Activated B cell treated with CpG ODN at 0.5 μM for 24 hours (primary cell): ENCODE measurements at regions of chr1 and their contacts with region 1.

Region 1: GRCh38 chr1:36285448-36286101 is 20.6 kb upstream of the SH3D21 start:
- DNase-seq: no peak
- ATAC-seq: peak; percentile 92
- H3K4me3 Mint-ChIP-seq: no peak overlapping the region
- H3K27ac Mint-ChIP-seq: peak overlapping the region; percentile 59
- H3K4me1 Mint-ChIP-seq: peaks cover 11% of the 10 kb centered on the region
- H3K27me3 Mint-ChIP-seq: no peaks in the 10 kb centered on the region
- CTCF ChIP-seq: no peak

Region 2: DNA sequence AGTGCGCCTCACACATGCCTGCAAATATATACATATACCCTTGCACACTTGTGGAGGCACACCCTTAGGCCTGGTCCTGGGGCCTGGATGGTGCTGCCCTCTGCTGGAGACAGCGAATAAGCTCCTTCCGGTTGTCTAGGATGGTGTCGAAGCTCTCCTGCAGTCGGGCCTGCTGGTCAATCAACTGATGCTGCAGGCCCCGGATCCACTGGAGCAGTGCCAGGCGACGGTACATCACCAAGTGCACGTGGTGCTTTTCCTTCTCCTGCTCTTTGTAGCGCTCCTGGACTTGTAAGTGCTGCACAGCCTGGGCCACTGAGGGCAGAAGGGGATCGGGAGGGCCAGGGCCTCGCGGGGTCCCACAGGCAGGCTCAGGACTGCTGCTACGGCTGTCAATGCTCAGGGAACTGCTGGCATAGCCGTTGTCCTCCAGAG is 570.0 kb before region 1 on chr1:
- CTCF ChIA-PET with region 1: no interaction called
- POLR2A ChIA-PET with region 1: no interaction called
- intact Hi-C with region 1: no loop called
- DNase-seq: peak; percentile 56
- ATAC-seq: peak; percentile 67
- H3K4me3 Mint-ChIP-seq: peak overlapping the region; percentile 32
- H3K27ac Mint-ChIP-seq: no peak overlapping the region
- H3K4me1 Mint-ChIP-seq: peaks cover 28% of the 10 kb centered on the region
- H3K27me3 Mint-ChIP-seq: no peaks in the 10 kb centered on the region
- CTCF ChIP-seq: no peak

Region 3: GRCh38 chr1:36014722-36015220 is 270.8 kb before region 1 on chr1:
- CTCF ChIA-PET with region 1: no interaction called
- POLR2A ChIA-PET with region 1: no interaction called
- intact Hi-C with region 1: no loop called
- DNase-seq: no peak
- ATAC-seq: no peak
- H3K4me3 Mint-ChIP-seq: no peak overlapping the region
- H3K27ac Mint-ChIP-seq: no peak overlapping the region
- H3K4me1 Mint-ChIP-seq: no peaks in the 10 kb centered on the region
- H3K27me3 Mint-ChIP-seq: no peaks in the 10 kb centered on the region
- CTCF ChIP-seq: no peak

Region 4: GRCh38 chr1:36273024-36273423 is 12.6 kb before region 1 on chr1:
- CTCF ChIA-PET with region 1: no interaction called
- POLR2A ChIA-PET with region 1: no interaction called
- intact Hi-C with region 1: no loop called
- DNase-seq: no peak
- ATAC-seq: no peak
- H3K4me3 Mint-ChIP-seq: no peak overlapping the region
- H3K27ac Mint-ChIP-seq: no peak overlapping the region
- H3K4me1 Mint-ChIP-seq: peaks cover 21% of the 10 kb centered on the region
- H3K27me3 Mint-ChIP-seq: no peaks in the 10 kb centered on the region
- CTCF ChIP-seq: no peak

Region 5: DNA sequence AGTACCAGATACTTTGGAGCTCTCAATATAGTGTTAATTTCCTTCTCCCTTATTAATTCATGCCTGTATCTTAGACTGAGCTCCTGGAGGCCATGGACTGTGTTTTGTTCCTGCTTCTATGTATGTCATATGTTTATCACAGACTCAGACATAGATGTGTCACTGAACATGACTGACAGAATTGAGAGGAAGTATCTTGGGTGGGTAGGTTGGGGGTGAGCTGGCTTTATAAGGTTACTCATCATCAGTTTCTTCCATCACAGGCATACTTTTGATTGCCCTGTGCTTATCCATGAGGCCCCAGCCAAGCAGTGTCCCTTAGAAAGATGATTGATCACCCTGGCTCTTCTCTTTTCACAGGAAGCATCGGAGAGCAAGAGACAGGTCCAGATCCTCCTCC is 15.0 kb after region 1 on chr1:
- CTCF ChIA-PET with region 1: interaction called, 18 read pairs
- POLR2A ChIA-PET with region 1: interaction called, 5 read pairs
- intact Hi-C with region 1: no loop called
- DNase-seq: no peak
- ATAC-seq: peak; percentile 60
- H3K4me3 Mint-ChIP-seq: peak overlapping the region; percentile 5
- H3K27ac Mint-ChIP-seq: peak overlapping the region; percentile 77
- H3K4me1 Mint-ChIP-seq: peaks cover 38% of the 10 kb centered on the region
- H3K27me3 Mint-ChIP-seq: no peaks in the 10 kb centered on the region
- CTCF ChIP-seq: no peak

Region 6: GRCh38 chr1:36339615-36340600 is 54.3 kb after region 1 on chr1:
- CTCF ChIA-PET with region 1: no interaction called
- POLR2A ChIA-PET with region 1: no interaction called
- intact Hi-C with region 1: no loop called
- DNase-seq: no peak
- ATAC-seq: no peak
- H3K4me3 Mint-ChIP-seq: no peak overlapping the region
- H3K27ac Mint-ChIP-seq: no peak overlapping the region
- H3K4me1 Mint-ChIP-seq: peaks cover 5% of the 10 kb centered on the region
- H3K27me3 Mint-ChIP-seq: no peaks in the 10 kb centered on the region
- CTCF ChIP-seq: no peak